Psoas muscle (tissue), 8 donors: ENCODE measurements at regions of chr2 and their contacts with region 1.

Region 1: DNA sequence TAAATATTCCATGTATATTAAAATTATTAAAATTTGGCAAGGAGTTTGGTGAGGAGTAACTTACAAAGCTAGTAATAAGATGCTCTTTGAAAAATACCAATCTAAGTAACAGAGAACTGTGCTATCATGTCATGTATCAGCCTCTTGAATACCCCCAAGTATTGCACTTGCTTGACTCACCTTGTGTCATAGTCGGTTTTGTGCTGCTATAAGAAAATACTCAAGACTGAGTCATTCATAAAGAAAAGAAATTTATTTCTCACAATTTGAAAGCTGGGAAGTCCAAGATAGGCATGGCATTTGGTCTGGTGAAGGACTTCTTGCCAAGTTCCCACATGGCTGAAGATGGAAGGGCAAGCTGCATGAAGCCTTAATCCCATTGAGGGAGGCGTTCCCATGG is 179.2 kb downstream of the MEMO1 start:
- DNase-seq: no peak
- ATAC-seq: no peak
- H3K4me3 ChIP-seq: no peak overlapping the region
- H3K27ac ChIP-seq: no peak overlapping the region
- H3K4me1 ChIP-seq: peaks cover 8% of the 10 kb centered on the region
- H3K27me3 ChIP-seq: no peaks in the 10 kb centered on the region
- CTCF ChIP-seq: no peak

Region 2: DNA sequence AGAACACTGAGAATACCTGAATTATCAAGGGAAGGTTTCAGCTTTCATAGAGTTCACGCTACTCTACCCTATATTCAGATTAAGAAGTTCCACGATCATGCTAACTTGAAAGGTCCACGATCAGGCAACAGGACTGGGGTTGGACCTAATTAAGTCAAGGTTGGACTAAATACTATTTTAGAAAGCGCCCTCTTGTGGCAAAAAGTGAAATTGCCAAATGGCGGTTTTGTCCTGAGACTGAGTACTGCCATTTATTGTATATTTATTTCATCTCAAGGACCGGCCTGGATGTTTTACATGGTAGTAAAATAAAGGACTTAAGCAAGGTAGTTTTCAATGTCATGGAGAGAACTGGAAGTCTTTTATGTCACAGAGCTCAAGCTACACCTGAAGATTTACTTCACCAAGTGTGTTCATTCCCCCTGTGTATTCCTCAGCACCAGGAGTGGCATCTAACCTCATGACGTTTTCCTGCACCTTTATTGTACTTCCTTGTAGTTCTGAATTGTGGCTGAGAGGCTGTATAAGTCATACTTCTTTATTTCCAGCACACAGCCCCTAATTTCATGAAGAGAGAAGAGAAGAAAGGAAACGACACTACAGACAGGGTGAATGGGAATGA is 307.6 kb before region 1 on chr2:
- intact Hi-C with region 1: loop called in 1 of 2 experiments (anchors 5 kb)
- DNase-seq: no peak
- ATAC-seq: peak in 1 of 4 donors; percentile 58
- H3K4me3 ChIP-seq: no peak overlapping the region
- H3K27ac ChIP-seq: no peak overlapping the region
- H3K4me1 ChIP-seq: no peaks in the 10 kb centered on the region
- H3K27me3 ChIP-seq: no peaks in the 10 kb centered on the region
- CTCF ChIP-seq: peak; percentile 64

Region 3: DNA sequence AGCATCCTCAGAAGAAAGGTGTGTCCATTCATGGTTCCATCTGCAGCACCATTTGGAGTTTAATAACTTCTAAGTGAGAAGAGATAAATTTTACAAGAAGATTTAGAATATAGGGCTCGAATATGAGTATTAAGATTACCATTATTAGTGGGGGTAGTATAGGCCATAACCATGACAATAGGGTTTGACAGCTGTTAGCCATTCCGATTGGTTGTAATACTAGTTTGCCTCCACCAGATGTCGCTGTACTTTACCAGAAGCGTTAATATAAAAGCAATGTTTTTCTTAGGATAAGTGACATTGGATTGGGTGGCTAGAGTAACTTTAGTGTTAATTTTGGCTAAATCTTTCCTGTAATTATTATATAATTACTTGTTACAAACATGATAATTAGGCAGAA is 143.3 kb before region 1 on chr2:
- intact Hi-C with region 1: loop called (anchors 5 kb)
- DNase-seq: no peak
- ATAC-seq: no peak
- H3K4me3 ChIP-seq: no peak overlapping the region
- H3K27ac ChIP-seq: no peak overlapping the region
- H3K4me1 ChIP-seq: no peaks in the 10 kb centered on the region
- H3K27me3 ChIP-seq: peaks cover 0 to under 1% (median 0%) of the 10 kb centered on the region in 3 donors
- CTCF ChIP-seq: peak; percentile 63